GM23248 (cell line): ENCODE measurements at regions of chr14 and their contacts with region 1.

Region 1: DNA sequence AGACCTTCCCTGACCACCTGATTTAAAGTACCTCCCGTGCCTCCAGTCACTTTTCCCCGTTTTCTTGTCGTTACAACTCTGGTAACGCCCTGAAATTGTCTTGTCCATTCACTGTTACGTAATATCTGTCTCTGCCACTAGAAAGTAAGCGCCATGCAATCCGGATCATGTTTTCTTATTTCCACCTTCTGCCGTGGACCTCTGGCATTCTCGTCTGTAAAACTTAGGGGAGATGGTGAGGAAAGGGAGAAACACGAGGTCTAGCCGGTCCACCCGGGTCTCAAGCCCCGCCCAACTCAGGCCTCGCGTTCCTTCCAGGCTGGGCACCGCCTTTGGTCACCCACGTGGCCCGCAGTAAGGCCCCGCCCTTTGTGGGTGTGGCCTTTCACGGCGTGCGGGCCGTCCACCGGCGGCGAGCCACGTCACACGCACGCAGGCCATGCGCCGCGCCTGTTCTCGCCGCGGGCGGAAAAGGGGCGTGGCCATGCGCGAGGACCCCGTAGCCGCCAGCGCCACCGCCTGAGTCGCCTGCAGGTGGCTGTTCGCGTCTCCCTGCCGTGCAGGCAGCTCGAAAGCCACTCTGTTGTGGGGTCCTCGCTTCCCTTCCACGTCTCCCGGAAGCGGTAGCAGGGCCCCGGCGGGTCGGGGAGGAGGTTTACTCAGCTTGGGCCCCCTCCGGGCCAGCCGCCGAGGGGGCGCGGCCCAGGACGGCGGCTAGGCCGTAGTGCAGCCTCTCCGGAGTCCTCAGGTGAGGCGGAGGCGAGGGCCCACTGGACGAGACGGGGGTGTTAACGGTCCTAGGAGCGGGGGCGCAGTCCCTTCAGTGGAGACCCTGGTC is at the start of gene GOLGA5:
- DNase-seq: peak; percentile 98
- H3K4me3 ChIP-seq: peak within 1 kb of the TSS; percentile 89
- H3K27ac ChIP-seq: peak within 1 kb of the TSS; percentile 89
- H3K4me1 ChIP-seq: peaks cover 23% of the 10 kb centered on the region
- H3K27me3 ChIP-seq: no peaks in the 10 kb centered on the region
- total RNA-seq, gene GOLGA5: 50.0 and 56.4 TPM in 2 replicates

Region 2: GRCh38 chr14:92135267-92135666 is 658.7 kb before region 1 on chr14:
- in situ Hi-C with region 1: loop called (anchors 25 kb)
- DNase-seq: peak; percentile 70
- H3K4me3 ChIP-seq: no peak overlapping the region
- H3K27ac ChIP-seq: no peak overlapping the region
- H3K4me1 ChIP-seq: no peaks in the 10 kb centered on the region
- H3K27me3 ChIP-seq: no peaks in the 10 kb centered on the region

Region 3: GRCh38 chr14:92456215-92457015 is 337.5 kb before region 1 on chr14:
- in situ Hi-C with region 1: no loop called
- DNase-seq: peak; percentile 90
- H3K4me3 ChIP-seq: no peak overlapping the region
- H3K27ac ChIP-seq: no peak overlapping the region
- H3K4me1 ChIP-seq: peaks cover 7% of the 10 kb centered on the region
- H3K27me3 ChIP-seq: no peaks in the 10 kb centered on the region